CD8-positive, alpha-beta T cell (primary cell): ENCODE measurements at regions of chr4 and their contacts with region 1.

Region 1: DNA sequence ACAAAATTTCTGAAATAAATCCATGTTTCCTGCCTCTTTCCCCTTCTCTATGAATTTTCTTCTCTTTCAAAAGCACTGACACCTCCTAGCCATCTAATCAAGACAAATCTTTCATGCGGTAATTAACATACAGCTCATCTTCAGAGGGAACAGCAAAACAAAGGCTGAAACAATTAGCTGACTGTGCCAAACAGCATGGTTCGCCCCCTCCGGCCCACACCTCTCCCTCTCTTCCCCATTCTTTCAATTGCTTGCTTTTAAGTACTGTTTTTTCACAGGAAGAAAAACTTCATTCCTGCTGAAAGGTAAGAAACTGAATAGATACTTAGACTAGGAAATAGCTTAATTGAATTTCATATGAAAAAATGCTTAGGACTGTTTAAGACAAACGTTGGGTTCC is 291.1 kb upstream of the NOCT start:
- DNase-seq: no peak
- ATAC-seq: no peak
- H3K4me3 ChIP-seq: no peak overlapping the region
- H3K4me3 Mint-ChIP-seq: no peak overlapping the region
- H3K27ac ChIP-seq: no peak overlapping the region
- H3K27ac Mint-ChIP-seq: no peak overlapping the region
- H3K4me1 ChIP-seq: no peaks in the 10 kb centered on the region
- H3K4me1 Mint-ChIP-seq: no peaks in the 10 kb centered on the region
- H3K27me3 ChIP-seq: no peaks in the 10 kb centered on the region
- H3K27me3 Mint-ChIP-seq: peaks cover 7% of the 10 kb centered on the region
- CTCF ChIP-seq: no peak

Region 2: GRCh38 chr4:138749303-138749702 is 24.8 kb after region 1 on chr4:
- CTCF ChIA-PET with region 1: no interaction called
- POLR2A ChIA-PET with region 1: no interaction called
- intact Hi-C with region 1: loop called in 1 of 2 experiments (anchors 1 kb)
- DNase-seq: no peak
- ATAC-seq: no peak
- H3K4me3 ChIP-seq: no peak overlapping the region
- H3K4me3 Mint-ChIP-seq: no peak overlapping the region
- H3K27ac ChIP-seq: no peak overlapping the region
- H3K27ac Mint-ChIP-seq: no peak overlapping the region
- H3K4me1 ChIP-seq: no peaks in the 10 kb centered on the region
- H3K4me1 Mint-ChIP-seq: no peaks in the 10 kb centered on the region
- H3K27me3 ChIP-seq: no peaks in the 10 kb centered on the region
- H3K27me3 Mint-ChIP-seq: no peaks in the 10 kb centered on the region
- CTCF ChIP-seq: no peak